ENCODE measurements at regions of chr18 and their contacts with region 1.

Region 1: DNA sequence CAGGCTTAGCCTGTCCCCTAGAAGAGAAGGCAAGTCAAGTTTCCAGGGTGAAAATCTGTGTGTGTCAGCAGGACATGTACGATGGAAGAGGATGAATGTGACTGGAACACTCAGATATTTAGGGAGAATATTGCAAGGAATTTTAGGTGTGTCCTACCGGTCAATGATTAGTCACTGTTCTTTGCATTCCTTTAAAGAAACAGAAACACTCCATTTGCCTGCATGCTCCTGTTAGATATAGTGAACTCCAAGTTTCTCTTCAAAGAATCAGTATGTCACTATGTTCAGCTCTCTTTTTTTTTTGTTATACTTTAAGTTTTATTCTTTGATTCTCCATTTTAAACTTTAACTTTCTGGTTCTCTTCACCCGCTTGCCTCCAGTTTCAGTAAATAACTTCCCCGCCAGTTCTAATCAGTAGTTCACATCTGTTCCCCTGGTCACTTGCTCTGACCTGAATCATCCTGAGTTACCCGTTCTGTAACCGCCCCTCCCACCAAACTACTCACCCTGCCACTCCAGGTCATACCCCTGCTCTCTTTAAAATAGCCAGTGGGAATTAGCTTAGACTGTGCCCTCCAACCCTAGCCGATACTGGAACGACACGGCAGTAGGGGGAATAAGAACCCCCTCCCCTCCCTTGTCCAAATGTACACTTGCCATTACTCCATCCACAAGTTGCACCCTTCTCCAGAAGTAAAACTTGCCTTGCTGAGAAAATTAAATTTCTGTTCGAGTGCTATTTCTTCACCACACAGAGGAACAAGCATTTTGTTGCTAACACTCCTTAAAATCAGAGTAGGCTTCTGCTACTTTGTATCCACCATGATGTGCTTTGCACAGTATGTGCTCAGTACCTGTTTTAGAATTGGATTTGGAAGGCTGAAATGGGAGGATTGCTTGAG is 268.4 kb downstream of the METTL4 start:
- DNase-seq: peak; percentile 83 to 92
- H3K4me3 ChIP-seq: peak overlapping the region; percentile 49; the same call in 1 of the 2 replicates
- H3K27ac ChIP-seq: peak overlapping the region; percentile 99
- H3K4me1 ChIP-seq: peaks cover 59% of the 10 kb centered on the region
- H3K27me3 ChIP-seq: no peaks in the 10 kb centered on the region
- CTCF ChIP-seq: no peak

Region 2: DNA sequence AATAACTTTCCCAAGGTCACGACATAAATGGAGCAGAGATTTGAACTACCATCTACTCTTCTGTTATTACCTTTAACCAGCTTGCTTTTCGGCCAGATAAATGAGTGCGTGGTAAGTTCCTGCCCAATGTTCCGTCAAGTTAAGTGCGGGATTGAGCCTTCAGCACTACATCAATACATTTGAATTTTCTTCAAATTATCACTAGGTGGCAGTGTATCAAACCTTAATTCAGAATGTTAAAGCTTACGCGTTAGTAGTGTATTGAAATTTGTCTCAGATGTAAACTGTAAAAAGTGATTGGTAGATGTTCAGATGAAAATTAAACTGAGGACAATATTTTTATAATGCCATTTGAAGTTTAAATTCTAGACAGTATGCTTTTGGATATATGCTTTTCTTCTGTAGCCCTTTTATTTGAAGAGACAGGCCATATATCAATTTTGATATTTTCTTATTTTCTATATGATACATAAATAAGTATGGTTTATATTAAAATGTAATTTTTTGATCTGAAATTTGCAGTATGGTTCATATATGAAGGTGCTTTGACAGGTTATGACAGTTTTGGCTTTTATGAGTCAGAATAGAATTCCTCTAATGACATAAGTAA is 716.9 kb before region 1 on chr18:
- CTCF ChIA-PET with region 1: no interaction called
- POLR2A ChIA-PET with region 1: no interaction called
- intact Hi-C with region 1: loop called (anchors 10 kb)
- DNase-seq: peak in 1 of 2 experiments; percentile 41
- H3K4me3 ChIP-seq: no peak overlapping the region
- H3K27ac ChIP-seq: no peak overlapping the region
- H3K4me1 ChIP-seq: no peaks in the 10 kb centered on the region
- H3K27me3 ChIP-seq: no peaks in the 10 kb centered on the region
- CTCF ChIP-seq: peak; percentile 70

Region 3: GRCh38 chr18:2111456-2111855 is 191.4 kb before region 1 on chr18:
- CTCF ChIA-PET with region 1: no interaction called
- POLR2A ChIA-PET with region 1: no interaction called
- intact Hi-C with region 1: loop called (anchors 1 kb)
- DNase-seq: peak; percentile 35 to 39
- H3K4me3 ChIP-seq: no peak overlapping the region
- H3K27ac ChIP-seq: no peak overlapping the region
- H3K4me1 ChIP-seq: peaks cover 25% of the 10 kb centered on the region
- H3K27me3 ChIP-seq: no peaks in the 10 kb centered on the region
- CTCF ChIP-seq: no peak

Region 4: GRCh38 chr18:2139691-2140090 is 163.2 kb before region 1 on chr18:
- CTCF ChIA-PET with region 1: no interaction called
- POLR2A ChIA-PET with region 1: no interaction called
- intact Hi-C with region 1: no loop called
- DNase-seq: peak; percentile 12 to 70
- H3K4me3 ChIP-seq: no peak overlapping the region
- H3K27ac ChIP-seq: peak overlapping the region; percentile 36; the same call in 1 of the 2 replicates
- H3K4me1 ChIP-seq: peaks cover 18% of the 10 kb centered on the region
- H3K27me3 ChIP-seq: no peaks in the 10 kb centered on the region
- CTCF ChIP-seq: no peak

Region 5: DNA sequence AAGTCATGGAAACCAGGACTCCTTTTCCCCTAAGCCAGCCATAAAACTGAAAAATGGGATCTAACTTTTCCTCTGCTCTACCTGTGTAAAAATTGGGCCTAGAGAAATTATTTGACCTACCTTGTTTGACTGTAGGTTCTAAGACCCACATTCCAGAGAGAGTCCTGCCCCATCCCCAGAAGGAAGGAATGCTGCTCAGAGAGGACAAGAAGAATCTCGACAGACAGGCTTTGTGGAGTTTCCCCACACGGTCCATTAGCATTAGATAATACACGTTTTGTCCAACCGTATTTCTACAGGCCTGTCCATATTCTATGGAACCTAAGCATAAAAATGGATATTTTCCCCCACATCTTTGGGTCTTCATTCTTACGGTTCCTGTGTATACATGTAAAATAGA is 134.8 kb before region 1 on chr18:
- CTCF ChIA-PET with region 1: no interaction called
- POLR2A ChIA-PET with region 1: no interaction called
- intact Hi-C with region 1: loop called (anchors 1 kb)
- DNase-seq: peak in 1 of 2 experiments; percentile 61
- H3K4me3 ChIP-seq: no peak overlapping the region
- H3K27ac ChIP-seq: no peak overlapping the region
- H3K4me1 ChIP-seq: peaks cover 29% of the 10 kb centered on the region
- H3K27me3 ChIP-seq: no peaks in the 10 kb centered on the region
- CTCF ChIP-seq: no peak

Region 6: DNA sequence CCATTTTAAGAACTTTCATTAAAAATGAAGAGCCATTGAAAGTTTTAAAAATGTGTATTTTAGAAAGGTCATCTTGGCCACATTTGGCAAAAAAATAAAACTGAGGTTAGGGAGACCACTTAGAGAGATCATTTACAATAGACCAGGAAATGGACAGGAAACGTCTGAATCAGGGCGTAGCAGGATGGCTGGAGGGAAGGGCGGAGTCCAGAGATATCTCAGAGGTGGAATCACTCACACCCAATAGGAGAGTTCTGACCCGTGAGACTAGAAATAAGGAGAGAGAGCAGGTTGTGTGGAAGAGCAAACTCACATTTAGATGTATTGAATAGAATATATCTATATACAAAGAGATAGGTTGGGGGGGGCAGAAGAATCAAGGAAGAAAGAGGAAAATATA is 104.9 kb before region 1 on chr18:
- CTCF ChIA-PET with region 1: no interaction called
- POLR2A ChIA-PET with region 1: no interaction called
- intact Hi-C with region 1: no loop called
- DNase-seq: peak in 1 of 2 experiments; percentile 15
- H3K4me3 ChIP-seq: no peak overlapping the region
- H3K27ac ChIP-seq: no peak overlapping the region
- H3K4me1 ChIP-seq: no peaks in the 10 kb centered on the region
- H3K27me3 ChIP-seq: no peaks in the 10 kb centered on the region
- CTCF ChIP-seq: no peak

Region 7: DNA sequence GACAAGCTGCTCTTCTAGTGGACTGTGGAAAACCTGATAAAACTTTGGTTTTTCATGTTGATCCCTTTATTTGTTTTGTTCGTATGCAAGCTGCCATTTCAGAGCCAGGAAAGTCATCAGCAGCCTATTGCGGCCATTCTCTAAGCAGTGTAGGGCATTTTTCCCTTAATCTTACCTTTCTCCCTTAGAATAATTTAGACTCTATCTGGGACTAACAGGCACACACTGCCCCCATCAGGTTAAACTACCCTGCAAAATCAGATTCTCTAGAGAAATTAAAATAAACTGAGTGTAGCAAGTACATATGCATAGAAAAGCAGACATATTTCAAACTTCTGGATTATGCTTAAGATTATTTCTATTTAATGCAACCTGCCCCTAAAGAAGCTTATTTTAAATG is 79.0 kb before region 1 on chr18:
- CTCF ChIA-PET with region 1: no interaction called
- POLR2A ChIA-PET with region 1: interaction called, 7 read pairs
- intact Hi-C with region 1: loop called (anchors 2 kb)
- DNase-seq: peak in 1 of 2 experiments; percentile 34
- H3K4me3 ChIP-seq: no peak overlapping the region
- H3K27ac ChIP-seq: peak overlapping the region; percentile 49; the same call in 1 of the 2 replicates
- H3K4me1 ChIP-seq: peaks cover 14% of the 10 kb centered on the region
- H3K27me3 ChIP-seq: no peaks in the 10 kb centered on the region
- CTCF ChIP-seq: peak; percentile 60

Region 8: GRCh38 chr18:2402084-2402483 is 99.2 kb after region 1 on chr18:
- CTCF ChIA-PET with region 1: no interaction called
- POLR2A ChIA-PET with region 1: no interaction called
- intact Hi-C with region 1: no loop called
- DNase-seq: no peak
- H3K4me3 ChIP-seq: no peak overlapping the region
- H3K27ac ChIP-seq: no peak overlapping the region
- H3K4me1 ChIP-seq: no peaks in the 10 kb centered on the region
- H3K27me3 ChIP-seq: no peaks in the 10 kb centered on the region
- CTCF ChIP-seq: no peak

Region 9: DNA sequence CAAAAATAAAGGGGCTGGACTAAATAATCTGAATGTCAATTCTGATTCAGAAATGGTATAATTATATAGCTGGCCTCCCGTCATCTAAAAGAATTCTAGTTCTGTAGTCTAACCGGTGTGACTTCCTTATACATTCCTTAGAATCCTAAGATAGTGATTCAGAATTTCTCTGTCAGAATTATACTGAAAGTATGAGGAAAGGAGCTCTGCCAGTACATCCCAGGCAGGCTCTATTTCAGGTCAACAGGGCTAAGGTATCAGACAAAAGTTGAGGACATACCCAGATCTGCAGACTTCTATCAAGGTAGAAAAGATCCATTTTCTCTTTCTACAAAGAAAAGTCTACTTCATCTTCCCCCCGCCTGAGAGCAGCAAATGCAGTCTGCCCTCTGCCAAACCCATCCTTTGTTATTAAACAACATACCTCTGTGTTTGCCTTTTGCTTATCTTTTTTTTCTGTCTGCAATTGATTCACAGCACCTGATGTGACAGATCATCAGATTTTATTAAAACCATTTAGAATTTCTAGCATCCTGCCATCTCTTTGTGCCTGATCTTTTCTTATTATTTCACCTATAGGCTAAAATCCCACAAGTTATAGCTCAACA is 140.0 kb after region 1 on chr18:
- CTCF ChIA-PET with region 1: no interaction called
- POLR2A ChIA-PET with region 1: interaction called, 7 read pairs
- intact Hi-C with region 1: loop called (anchors 1 kb)
- DNase-seq: peak; percentile 55 to 93
- H3K4me3 ChIP-seq: no peak overlapping the region; the same call in 1 of the 2 replicates
- H3K27ac ChIP-seq: peak overlapping the region; percentile 63
- H3K4me1 ChIP-seq: peaks cover 28% of the 10 kb centered on the region
- H3K27me3 ChIP-seq: no peaks in the 10 kb centered on the region
- CTCF ChIP-seq: no peak

Region 10: GRCh38 chr18:2547477-2548087 is 244.7 kb after region 1 on chr18:
- CTCF ChIA-PET with region 1: interaction called, 3 read pairs
- POLR2A ChIA-PET with region 1: no interaction called
- intact Hi-C with region 1: loop called (anchors 1 kb)
- DNase-seq: no peak
- H3K4me3 ChIP-seq: no peak overlapping the region
- H3K27ac ChIP-seq: no peak overlapping the region
- H3K4me1 ChIP-seq: no peaks in the 10 kb centered on the region
- H3K27me3 ChIP-seq: no peaks in the 10 kb centered on the region
- CTCF ChIP-seq: peak; percentile 84

Region 11: GRCh38 chr18:2794159-2794558 is 491.3 kb after region 1 on chr18:
- CTCF ChIA-PET with region 1: no interaction called
- POLR2A ChIA-PET with region 1: no interaction called
- intact Hi-C with region 1: no loop called
- DNase-seq: no peak
- H3K4me3 ChIP-seq: no peak overlapping the region
- H3K27ac ChIP-seq: no peak overlapping the region
- H3K4me1 ChIP-seq: no peaks in the 10 kb centered on the region
- H3K27me3 ChIP-seq: no peaks in the 10 kb centered on the region
- CTCF ChIP-seq: no peak

Measured in PC-9 (cell line).